ENCODE measurements at regions of chr13 and their contacts with region 1.

Region 1: GRCh38 chr13:60417734-60418133 is 20.7 kb downstream of the TDRD3 start:
- DNase-seq: no peak
- H3K4me3 Mint-ChIP-seq: no peak overlapping the region
- H3K27ac Mint-ChIP-seq: no peak overlapping the region
- H3K4me1 Mint-ChIP-seq: peaks cover 16% of the 10 kb centered on the region
- H3K27me3 Mint-ChIP-seq: no peaks in the 10 kb centered on the region

Region 2: DNA sequence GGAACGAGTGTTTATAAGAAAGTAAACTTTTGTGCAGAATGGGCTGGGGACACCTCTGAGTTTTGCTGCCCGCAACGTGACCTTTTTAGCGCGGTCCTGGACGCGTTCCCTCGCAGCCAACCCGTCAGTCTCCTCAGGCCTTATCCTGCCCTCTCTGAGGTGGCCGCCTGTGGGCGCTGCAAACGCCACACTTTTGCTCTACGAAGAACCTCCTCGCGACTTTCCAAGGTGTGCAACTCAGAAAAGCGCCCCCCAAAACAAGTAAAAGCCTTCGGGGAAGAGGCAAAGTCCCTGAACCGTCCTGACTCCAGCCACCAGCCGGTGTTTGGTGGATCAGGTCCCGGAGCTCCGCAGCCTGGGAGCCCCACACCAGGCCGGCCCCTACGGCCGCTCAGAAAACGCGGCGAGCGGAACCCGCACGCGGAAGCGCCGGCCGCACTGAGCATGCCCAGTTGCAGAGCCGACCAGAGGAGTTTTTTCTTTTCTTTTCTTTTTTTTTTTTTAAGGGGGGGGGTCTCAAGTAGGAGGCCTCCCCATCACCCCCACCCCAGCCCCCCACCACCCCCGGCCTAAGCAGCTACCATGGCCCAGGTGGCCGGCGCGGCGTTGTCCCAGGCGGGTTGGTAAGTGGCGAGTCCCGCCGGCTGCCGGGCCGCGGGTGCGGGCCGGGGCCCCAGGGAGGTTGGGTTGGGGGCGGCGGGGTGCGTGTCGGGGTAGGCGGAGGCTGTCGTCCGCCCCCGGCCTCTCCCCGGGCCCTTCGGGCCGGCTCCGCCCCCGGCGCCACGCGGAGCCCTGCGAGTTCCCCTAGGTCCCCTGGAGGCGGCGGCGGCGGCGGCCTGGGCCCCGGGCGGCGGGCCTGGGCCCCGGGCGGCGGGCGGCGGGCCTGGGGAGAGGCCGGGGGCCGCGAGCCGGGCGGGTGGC is 20.7 kb before region 1 on chr13 and contains the start of gene TDRD3:
- CTCF ChIA-PET with region 1: interaction called, 7 read pairs
- POLR2A ChIA-PET with region 1: interaction called, 6 read pairs
- intact Hi-C with region 1: loop called (anchors 1 kb)
- DNase-seq: peak; percentile 89
- H3K4me3 Mint-ChIP-seq: peak within 1 kb of the TSS; percentile 90
- H3K27ac Mint-ChIP-seq: peak within 1 kb of the TSS; percentile 95
- H3K4me1 Mint-ChIP-seq: peaks cover 31% of the 10 kb centered on the region
- H3K27me3 Mint-ChIP-seq: no peaks in the 10 kb centered on the region
- total RNA-seq, gene TDRD3: 16.4 to 16.5 TPM